AG04449 (cell line): ENCODE measurements at regions of chr6 and their contacts with region 1.

Region 1: GRCh38 chr6:88870717-88871330 is 92.6 kb downstream of the RNGTT start:
- DNase-seq: no peak
- H3K4me3 ChIP-seq: no peak overlapping the region
- CTCF ChIP-seq: peak; percentile 38

Region 2: GRCh38 chr6:87832025-87832825 is 1038.6 kb before region 1 on chr6:
- CTCF ChIA-PET with region 1: interaction called, 17 read pairs
- POLR2A ChIA-PET with region 1: no interaction called
- DNase-seq: no peak
- H3K4me3 ChIP-seq: peak overlapping the region; percentile 50
- CTCF ChIP-seq: peak; percentile 4

Region 3: GRCh38 chr6:87929843-87930288 is 941.0 kb before region 1 on chr6:
- CTCF ChIA-PET with region 1: interaction called, 88 read pairs
- POLR2A ChIA-PET with region 1: no interaction called
- DNase-seq: peak; percentile 40
- H3K4me3 ChIP-seq: no peak overlapping the region
- CTCF ChIP-seq: peak; percentile 95

Region 4: DNA sequence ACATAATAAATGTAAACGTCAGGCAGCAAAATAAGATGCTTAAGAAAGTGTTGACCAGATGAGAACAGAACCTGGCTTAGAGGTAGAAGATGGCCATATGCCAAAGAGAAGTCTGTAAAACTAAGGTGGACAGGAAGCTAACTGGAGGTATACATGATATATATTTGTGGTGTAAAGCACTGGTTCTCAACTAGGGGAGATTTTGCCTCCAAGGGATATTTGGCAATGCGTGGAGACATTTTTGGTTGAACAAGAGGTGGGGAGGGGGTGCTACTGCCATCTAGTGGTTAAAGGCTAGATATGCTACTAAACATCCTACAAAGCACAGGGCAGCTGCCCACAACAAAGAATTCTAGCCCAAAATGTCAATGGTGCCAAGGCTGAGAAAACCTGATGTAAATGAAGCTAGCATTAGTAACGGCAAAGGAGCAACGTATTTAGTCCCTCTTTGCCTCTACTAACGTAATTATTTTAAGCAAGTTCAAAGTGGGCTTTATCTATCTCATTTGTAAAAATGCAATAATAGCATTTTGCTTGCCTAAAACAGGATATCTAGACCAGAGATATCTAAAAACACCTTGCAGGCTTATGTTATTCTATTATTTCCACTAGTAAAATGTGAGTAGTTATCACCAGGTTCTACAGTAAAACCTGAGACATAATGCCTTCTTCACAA is 90.0 kb before region 1 on chr6:
- CTCF ChIA-PET with region 1: interaction called, 19 read pairs
- POLR2A ChIA-PET with region 1: no interaction called
- DNase-seq: peak; percentile 5
- H3K4me3 ChIP-seq: no peak overlapping the region
- CTCF ChIP-seq: peak; percentile 75

Region 5: GRCh38 chr6:88855541-88856147 is 15.2 kb before region 1 on chr6:
- CTCF ChIA-PET with region 1: interaction called, 53 read pairs
- POLR2A ChIA-PET with region 1: no interaction called
- DNase-seq: no peak
- H3K4me3 ChIP-seq: no peak overlapping the region
- CTCF ChIP-seq: no peak

Region 6: DNA sequence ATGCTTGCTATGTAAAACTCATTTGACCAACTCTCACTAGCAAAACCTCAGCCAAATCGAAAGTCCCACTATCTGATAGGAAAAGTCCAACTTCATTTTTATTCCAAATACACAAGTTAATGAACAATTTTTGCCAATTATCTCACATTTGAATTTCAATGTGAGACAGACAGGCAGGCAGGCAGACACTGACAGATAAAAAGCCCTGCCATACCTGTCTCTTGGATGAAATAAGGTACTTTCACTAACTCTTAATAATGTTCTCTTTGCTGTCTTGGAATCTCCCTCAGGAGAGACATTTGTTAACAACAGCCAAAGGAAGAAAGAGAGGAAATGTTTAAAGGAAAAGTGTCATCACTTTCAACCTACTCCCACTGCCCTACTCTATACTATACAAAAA is 10.6 kb after region 1 on chr6:
- CTCF ChIA-PET with region 1: interaction called, 15 read pairs
- POLR2A ChIA-PET with region 1: no interaction called
- DNase-seq: no peak
- H3K4me3 ChIP-seq: no peak overlapping the region
- CTCF ChIP-seq: no peak